ENCODE measurements at regions of chr1 and their contacts with region 1.

Region 1: GRCh38 chr1:107750358-107750959 is 214.5 kb downstream of the VAV3 start:
- DNase-seq: peak; percentile 70
- H3K4me3 ChIP-seq: no peak overlapping the region
- H3K27ac ChIP-seq: no peak overlapping the region
- H3K4me1 ChIP-seq: peaks cover 0 to 10% (median 0%) of the 10 kb centered on the region in 4 donors
- H3K27me3 ChIP-seq: no peaks in the 10 kb centered on the region
- CTCF ChIP-seq: peak; percentile 24 to 66 (median 47)
- EP300 ChIP-seq: no peak
- POLR2A ChIP-seq: no peak

Region 2: GRCh38 chr1:106975944-106976343 is 774.5 kb before region 1 on chr1:
- intact Hi-C with region 1: loop called (anchors 10 kb)
- DNase-seq: no peak
- H3K4me3 ChIP-seq: no peak overlapping the region
- H3K27ac ChIP-seq: no peak overlapping the region
- H3K4me1 ChIP-seq: peaks cover 0 to 23% (median 3%) of the 10 kb centered on the region in 4 donors
- H3K27me3 ChIP-seq: no peaks in the 10 kb centered on the region
- CTCF ChIP-seq: no peak
- EP300 ChIP-seq: no peak
- POLR2A ChIP-seq: no peak

Region 3: GRCh38 chr1:107056426-107057196 is 693.8 kb before region 1 on chr1 and contains the start of gene PRMT6:
- intact Hi-C with region 1: loop called (anchors 2 kb)
- DNase-seq: peak; percentile 92
- H3K4me3 ChIP-seq: peak within 1 kb of the TSS; percentile 62 to 90 (median 80)
- H3K27ac ChIP-seq: peak within 1 kb of the TSS; percentile 83 to 93 (median 91)
- H3K4me1 ChIP-seq: peaks cover 0 to 24% (median 13%) of the 10 kb centered on the region in 4 donors
- H3K27me3 ChIP-seq: no peaks in the 10 kb centered on the region
- CTCF ChIP-seq: no peak
- EP300 ChIP-seq: no peak
- POLR2A ChIP-seq: peak; percentile 48 to 64
- total RNA-seq, gene PRMT6: 6.1 to 15.6 (median 11.9) TPM

Region 4: DNA sequence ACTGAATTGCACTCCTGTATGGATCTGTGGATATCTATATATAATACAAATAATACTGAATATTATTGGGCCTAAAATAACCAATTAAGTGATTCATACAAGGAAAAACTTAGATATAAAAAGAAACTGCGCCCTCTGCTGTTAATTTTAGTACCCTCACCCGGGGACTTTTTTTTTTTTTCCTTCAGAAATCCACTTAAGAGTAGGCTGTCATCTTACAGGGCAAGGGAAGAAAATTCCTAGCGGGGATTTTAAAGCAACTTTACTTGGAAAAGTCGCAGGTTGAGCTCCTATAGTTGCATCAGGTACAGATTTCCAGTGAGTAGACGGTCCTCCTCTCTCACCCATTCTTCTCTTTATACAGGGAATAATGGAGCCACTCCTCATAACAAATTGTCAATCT is 608.3 kb before region 1 on chr1:
- intact Hi-C with region 1: loop called (anchors 5 kb)
- DNase-seq: no peak
- H3K4me3 ChIP-seq: peak overlapping the region; percentile 58 to 73 (median 68)
- H3K27ac ChIP-seq: peak overlapping the region in 2 of 4 donors; percentile 49 to 73
- H3K4me1 ChIP-seq: peaks cover 0 to 21% (median 15%) of the 10 kb centered on the region in 4 donors
- H3K27me3 ChIP-seq: no peaks in the 10 kb centered on the region
- CTCF ChIP-seq: peak; percentile 20 to 71 (median 38)
- EP300 ChIP-seq: no peak
- POLR2A ChIP-seq: no peak

Region 5: DNA sequence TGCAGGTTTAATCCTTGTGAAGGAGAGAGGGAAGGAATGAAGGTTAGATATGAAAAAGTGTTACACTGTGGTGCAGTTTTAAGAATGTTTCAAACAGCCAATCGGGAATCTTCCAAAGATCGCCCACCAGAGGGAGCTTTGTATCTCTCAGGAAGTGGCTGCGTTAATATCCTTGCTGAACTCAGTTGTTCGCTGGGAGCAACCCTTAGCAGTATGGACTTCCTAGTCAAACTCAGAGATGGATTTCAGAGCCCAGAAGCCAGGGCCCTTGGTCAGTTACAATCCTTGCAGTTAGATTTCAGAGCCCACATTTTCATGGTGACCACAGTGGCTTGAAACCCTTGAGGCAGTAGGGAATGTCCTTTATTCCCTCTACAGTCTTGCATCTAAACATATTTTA is 473.4 kb before region 1 on chr1:
- intact Hi-C with region 1: loop called (anchors 2 kb)
- DNase-seq: peak; percentile 60
- H3K4me3 ChIP-seq: no peak overlapping the region
- H3K27ac ChIP-seq: no peak overlapping the region
- H3K4me1 ChIP-seq: no peaks in the 10 kb centered on the region
- H3K27me3 ChIP-seq: no peaks in the 10 kb centered on the region
- CTCF ChIP-seq: peak; percentile 8 to 35 (median 24)
- EP300 ChIP-seq: no peak
- POLR2A ChIP-seq: no peak

Region 6: GRCh38 chr1:107430540-107431228 is 319.8 kb before region 1 on chr1:
- intact Hi-C with region 1: loop called (anchors 5 kb)
- DNase-seq: no peak
- H3K4me3 ChIP-seq: no peak overlapping the region
- H3K27ac ChIP-seq: no peak overlapping the region
- H3K4me1 ChIP-seq: no peaks in the 10 kb centered on the region
- H3K27me3 ChIP-seq: no peaks in the 10 kb centered on the region
- CTCF ChIP-seq: peak in 3 of 4 experiments; percentile 25 to 49 (median 32)
- EP300 ChIP-seq: no peak
- POLR2A ChIP-seq: no peak

Region 7: GRCh38 chr1:107529502-107530149 is 220.8 kb before region 1 on chr1:
- intact Hi-C with region 1: loop called (anchors 5 kb)
- DNase-seq: no peak
- H3K4me3 ChIP-seq: no peak overlapping the region
- H3K27ac ChIP-seq: peak overlapping the region in 3 of 4 donors; percentile 53 to 61 (median 59)
- H3K4me1 ChIP-seq: peaks cover 0 to 31% (median 13%) of the 10 kb centered on the region in 4 donors
- H3K27me3 ChIP-seq: no peaks in the 10 kb centered on the region
- CTCF ChIP-seq: peak in 3 of 4 experiments; percentile 67 to 84 (median 70)
- EP300 ChIP-seq: no peak
- POLR2A ChIP-seq: no peak

Region 8: DNA sequence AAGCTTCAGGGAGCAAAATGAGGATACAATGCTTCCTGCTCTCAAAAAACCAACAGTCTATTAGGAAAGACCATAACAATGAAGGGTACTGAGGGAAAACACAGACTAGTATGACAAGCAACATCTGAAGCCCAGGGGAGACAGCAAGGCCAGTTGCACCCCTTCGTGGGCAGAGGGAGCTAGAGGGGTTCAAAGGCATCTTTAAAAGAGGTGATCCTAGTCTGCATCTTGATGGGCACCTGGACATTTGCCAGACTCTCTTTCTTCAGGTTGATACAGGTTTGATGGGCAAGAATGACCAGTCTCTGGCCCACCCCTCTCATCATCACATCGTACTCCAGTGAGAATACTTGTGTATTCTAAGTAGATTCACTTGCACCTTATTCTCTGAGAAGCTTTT is 36.8 kb after region 1 on chr1:
- intact Hi-C with region 1: no loop called
- DNase-seq: no peak
- H3K4me3 ChIP-seq: no peak overlapping the region
- H3K27ac ChIP-seq: no peak overlapping the region
- H3K4me1 ChIP-seq: no peaks in the 10 kb centered on the region
- H3K27me3 ChIP-seq: no peaks in the 10 kb centered on the region
- CTCF ChIP-seq: no peak
- EP300 ChIP-seq: no peak
- POLR2A ChIP-seq: no peak

Measured in sigmoid colon (tissue), 7 donors.